Sciatic nerve (tissue), 2 donors: ENCODE measurements at regions of chr1 and their contacts with region 1.

Region 1: DNA sequence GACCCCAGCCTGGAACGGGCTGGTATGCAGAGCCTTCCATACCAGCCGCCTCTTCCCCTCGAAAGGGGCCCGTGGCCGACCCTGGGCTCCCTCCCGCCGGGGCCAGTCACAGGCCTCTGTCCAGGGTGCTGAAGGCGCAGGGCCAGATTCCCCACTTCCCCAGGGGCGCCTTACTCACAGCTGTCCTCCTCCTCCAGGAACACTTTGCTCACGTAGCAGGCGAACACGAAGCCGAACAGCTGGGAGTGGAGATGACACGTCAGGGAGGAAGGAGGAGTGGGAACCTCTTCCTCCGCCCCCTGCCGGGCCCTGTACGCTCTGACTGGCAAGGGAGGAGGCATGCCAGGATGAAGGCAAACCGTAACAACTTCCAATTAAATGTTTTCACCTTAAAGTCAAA is 57.3 kb downstream of the NKAIN1 start:
- DNase-seq: peak; percentile 79
- ATAC-seq: peak; percentile 92

Region 2: DNA sequence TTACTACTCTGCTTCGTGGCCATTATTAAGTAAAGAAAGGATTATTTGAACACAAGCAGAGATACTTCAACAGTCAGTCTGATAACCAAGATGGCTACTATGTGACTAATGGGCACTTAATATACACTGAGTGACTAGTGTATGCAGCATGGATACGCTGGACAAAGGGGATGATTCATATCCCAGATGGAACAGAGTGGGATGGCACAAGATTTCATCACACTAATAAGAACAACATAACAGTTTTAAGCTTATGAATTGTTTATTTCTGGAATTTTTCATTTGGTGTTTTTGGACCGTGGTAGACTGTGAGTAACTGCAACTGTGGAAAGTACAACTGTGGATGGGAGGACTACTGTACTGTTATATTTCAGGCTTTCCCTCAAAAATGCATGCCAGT is 123.9 kb after region 1 on chr1:
- intact Hi-C with region 1: no loop called
- DNase-seq: no peak
- ATAC-seq: no peak

Region 3: DNA sequence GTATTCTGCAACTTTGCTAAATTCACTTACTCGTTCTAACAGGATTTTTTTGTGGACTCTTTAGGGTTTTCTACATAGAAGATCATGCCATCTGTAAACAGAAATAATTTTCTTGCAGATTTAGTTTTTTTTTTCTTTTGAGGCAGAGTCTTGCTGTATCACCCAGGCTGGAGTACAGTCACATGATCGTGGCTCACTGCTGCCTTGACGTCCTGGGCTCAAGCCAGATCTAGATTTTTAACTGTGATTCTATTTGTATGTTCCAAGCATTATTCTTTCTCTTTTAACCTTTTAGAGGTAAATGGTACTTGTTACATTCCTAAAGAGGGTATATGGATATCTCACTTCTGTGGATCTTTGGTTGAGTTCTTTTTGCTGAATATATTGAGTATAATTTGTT is 171.9 kb after region 1 on chr1:
- intact Hi-C with region 1: loop called (anchors 10 kb)
- DNase-seq: no peak
- ATAC-seq: no peak

Region 4: DNA sequence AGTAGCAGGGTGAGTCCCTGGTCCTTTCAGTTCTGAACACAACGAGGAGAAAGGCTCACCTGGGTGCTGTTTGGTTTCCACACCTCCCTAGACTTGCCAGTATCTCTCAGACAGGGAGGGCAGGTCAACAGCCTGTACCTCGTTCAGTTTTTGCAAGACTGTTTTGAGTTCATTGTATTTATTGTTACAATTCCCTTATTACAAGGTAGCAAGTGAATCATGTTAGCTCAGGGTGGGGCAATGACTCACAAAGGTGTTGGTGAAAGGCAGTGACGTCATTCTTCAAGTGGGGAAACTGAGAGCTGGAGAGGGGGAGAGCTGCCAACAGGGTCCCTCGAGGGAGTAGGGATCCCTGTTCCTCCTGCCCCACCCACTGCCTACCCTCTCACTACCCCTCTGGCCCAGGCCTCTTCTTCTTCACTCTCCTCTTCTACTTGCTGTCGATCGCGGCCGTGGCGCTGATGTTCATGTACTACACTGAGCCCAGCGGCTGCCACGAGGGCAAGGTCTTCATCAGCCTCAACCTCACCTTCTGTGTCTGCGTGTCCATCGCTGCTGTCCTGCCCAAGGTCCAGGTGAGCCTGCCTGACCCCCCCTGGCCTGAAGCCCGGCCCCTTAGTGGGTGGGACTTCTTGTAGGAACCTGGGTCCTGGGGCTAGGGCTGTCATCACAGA is 244.0 kb after region 1 on chr1:
- intact Hi-C with region 1: loop called (anchors 5 kb)
- DNase-seq: no peak
- ATAC-seq: no peak